Sigmoid colon (tissue), 7 donors: ENCODE measurements at regions of chr10 and their contacts with region 1.

Region 1: GRCh38 chr10:74826142-74827044 is at the start of gene KAT6B:
- DNase-seq: peak; percentile 100
- H3K4me3 ChIP-seq: peak within 1 kb of the TSS; percentile 69 to 99 (median 88)
- H3K27ac ChIP-seq: peak within 1 kb of the TSS; percentile 99 to 100 (median 99)
- H3K4me1 ChIP-seq: peaks cover 0 to 49% (median 37%) of the 10 kb centered on the region in 4 donors
- H3K27me3 ChIP-seq: no peaks in the 10 kb centered on the region
- CTCF ChIP-seq: peak in 1 of 4 experiments; percentile 28
- EP300 ChIP-seq: no peak
- POLR2A ChIP-seq: no peak
- total RNA-seq, gene KAT6B: 49.9 to 77.0 (median 64.2) TPM

Region 2: DNA sequence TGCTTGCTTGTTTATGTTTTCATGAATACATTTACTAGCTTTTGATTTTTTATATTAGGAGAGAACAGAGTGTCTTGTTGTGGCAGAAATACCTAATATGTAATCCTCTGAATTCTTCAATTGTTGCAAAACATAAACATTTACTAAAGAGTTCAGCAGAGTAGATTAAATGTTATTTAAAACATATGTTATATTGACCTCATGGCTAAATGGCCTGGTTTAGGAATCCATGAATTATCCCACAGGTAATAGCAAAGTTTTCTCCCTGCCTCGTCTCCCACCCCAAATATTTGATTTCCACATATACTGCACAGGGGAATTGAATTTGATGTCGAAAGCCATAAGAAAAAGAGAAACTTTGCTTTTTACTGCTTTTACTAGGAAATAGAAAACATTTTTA is 563.5 kb before region 1 on chr10:
- intact Hi-C with region 1: loop called (anchors 10 kb)
- DNase-seq: no peak
- H3K4me3 ChIP-seq: no peak overlapping the region
- H3K27ac ChIP-seq: no peak overlapping the region
- H3K4me1 ChIP-seq: peaks cover 0 to 5% (median 2%) of the 10 kb centered on the region in 4 donors
- H3K27me3 ChIP-seq: no peaks in the 10 kb centered on the region
- CTCF ChIP-seq: no peak
- EP300 ChIP-seq: no peak
- POLR2A ChIP-seq: no peak

Region 3: GRCh38 chr10:74753442-74754211 is 72.8 kb before region 1 on chr10:
- intact Hi-C with region 1: loop called (anchors 5 kb)
- DNase-seq: peak; percentile 86
- H3K4me3 ChIP-seq: peak overlapping the region in 1 of 4 donors; percentile 2
- H3K27ac ChIP-seq: peak overlapping the region in 3 of 4 donors; percentile 65 to 76 (median 68)
- H3K4me1 ChIP-seq: peaks cover 0 to 24% (median 17%) of the 10 kb centered on the region in 4 donors
- H3K27me3 ChIP-seq: no peaks in the 10 kb centered on the region
- CTCF ChIP-seq: no peak
- EP300 ChIP-seq: peak in 3 of 4 donors; percentile 11 to 54 (median 41)
- POLR2A ChIP-seq: no peak

Region 4: GRCh38 chr10:75019370-75019769 is 193.0 kb after region 1 on chr10:
- intact Hi-C with region 1: loop called (anchors 5 kb)
- DNase-seq: no peak
- H3K4me3 ChIP-seq: no peak overlapping the region
- H3K27ac ChIP-seq: no peak overlapping the region
- H3K4me1 ChIP-seq: peaks cover 0 to 20% (median 14%) of the 10 kb centered on the region in 4 donors
- H3K27me3 ChIP-seq: no peaks in the 10 kb centered on the region
- CTCF ChIP-seq: peak in 2 of 4 experiments; percentile 19 to 20
- EP300 ChIP-seq: no peak
- POLR2A ChIP-seq: no peak

Region 5: DNA sequence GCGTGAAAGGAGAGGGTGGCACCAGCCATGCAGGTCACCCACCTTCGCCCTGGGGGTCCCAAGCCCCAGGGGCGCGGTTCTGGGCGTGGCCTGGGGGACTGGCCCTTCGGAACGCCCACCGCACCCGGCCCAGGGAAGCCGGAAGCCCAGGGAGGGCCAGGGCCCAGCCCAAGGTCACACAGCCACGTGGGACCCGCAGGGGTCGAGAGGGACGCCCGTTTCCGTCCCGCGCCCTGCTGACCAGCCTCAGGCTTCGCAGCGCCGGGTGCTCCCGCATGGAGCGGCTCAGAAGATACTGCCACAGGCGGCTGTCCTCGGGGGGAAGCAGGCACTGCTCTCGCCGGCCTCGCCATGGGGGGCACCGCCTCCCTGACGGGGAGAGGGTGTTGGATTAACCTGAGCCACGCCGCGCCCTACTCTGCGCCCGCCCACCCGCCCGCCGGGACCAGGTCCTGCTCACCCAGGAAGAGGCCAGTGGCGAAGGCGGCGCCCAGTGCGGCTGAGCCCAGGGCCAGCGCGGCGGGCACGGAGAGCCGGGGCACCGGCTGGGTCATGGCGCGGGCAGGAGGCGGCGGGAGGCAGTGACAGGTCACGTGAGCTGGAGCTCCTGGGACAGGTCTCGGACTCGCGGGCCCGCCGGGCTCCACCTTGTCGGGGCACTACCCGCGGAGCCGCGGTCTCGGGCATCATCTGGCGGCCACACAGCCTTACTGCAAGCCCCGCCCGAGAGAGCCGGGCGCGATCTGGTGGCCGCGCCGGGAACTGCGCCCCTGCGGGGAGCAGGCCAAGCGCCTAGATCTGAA is 409.2 kb after region 1 on chr10 and contains the start of gene COMTD1:
- intact Hi-C with region 1: loop called (anchors 10 kb)
- DNase-seq: peak; percentile 97
- H3K4me3 ChIP-seq: peak within 1 kb of the TSS; percentile 62 to 82 (median 77)
- H3K27ac ChIP-seq: peak within 1 kb of the TSS; percentile 81 to 90 (median 82)
- H3K4me1 ChIP-seq: peaks cover 0 to 25% (median 17%) of the 10 kb centered on the region in 4 donors
- H3K27me3 ChIP-seq: no peaks in the 10 kb centered on the region
- CTCF ChIP-seq: peak; percentile 100
- EP300 ChIP-seq: no peak
- POLR2A ChIP-seq: no peak
- total RNA-seq, gene COMTD1: 7.8 to 11.4 (median 10.3) TPM